CD8-positive, alpha-beta T cell (primary cell): ENCODE measurements at regions of chr14 and their contacts with region 1.

Region 1: DNA sequence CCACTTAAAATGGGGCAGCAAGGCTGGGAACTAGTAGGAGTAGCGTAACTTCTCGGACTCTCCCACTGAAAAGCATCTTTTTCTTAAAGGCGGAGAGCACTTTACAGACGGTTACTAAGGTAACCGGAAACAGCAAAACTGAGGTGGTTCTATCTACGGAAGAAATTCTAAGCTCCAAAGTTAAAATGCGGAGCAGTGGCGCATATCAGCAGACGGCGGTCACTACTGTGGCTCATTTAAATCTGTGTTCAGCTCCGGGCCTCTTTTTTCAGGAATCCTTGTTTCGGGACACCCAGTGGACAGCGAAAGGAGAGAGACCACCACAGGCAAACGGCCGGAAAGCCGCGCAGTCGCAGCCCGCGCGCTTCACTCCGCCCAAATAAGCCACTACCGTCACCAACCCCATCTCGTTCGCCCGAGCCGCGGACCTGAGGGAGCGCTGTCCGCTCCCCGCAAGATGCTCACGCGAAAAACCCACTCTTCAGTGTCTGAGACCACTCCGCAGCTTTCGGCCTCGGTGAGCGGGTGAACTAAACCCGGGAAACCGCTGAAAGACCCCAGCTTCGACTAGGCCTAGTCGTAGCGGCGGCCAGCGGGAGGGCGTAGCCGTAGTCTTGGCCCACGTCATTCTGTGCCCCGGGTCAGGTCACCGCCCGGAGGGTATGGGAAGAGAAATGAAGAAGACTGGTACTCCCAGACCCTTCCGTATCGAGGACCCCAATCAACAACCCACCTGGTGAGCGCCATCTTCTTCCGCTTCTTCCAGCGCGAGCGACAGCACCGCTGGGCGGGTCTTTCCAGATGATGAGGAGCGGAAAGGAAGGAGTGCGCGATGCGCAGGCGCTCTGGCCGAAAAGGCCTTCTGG is at the start of gene SNW1:
- DNase-seq: peak; percentile 78 to 97 (median 89)
- ATAC-seq: peak; percentile 91
- H3K4me3 ChIP-seq: peak within 1 kb of the TSS; percentile 78 to 90
- H3K4me3 Mint-ChIP-seq: peak within 1 kb of the TSS; percentile 96
- H3K27ac ChIP-seq: peak within 1 kb of the TSS; percentile 97 to 99
- H3K27ac Mint-ChIP-seq: peak within 1 kb of the TSS; percentile 98
- H3K4me1 ChIP-seq: peaks cover 34% of the 10 kb centered on the region
- H3K4me1 Mint-ChIP-seq: peaks cover 50% of the 10 kb centered on the region
- H3K27me3 ChIP-seq: no peaks in the 10 kb centered on the region
- H3K27me3 Mint-ChIP-seq: no peaks in the 10 kb centered on the region
- CTCF ChIP-seq: no peak
- total RNA-seq, gene SNW1: 115 to 124 TPM

Region 2: GRCh38 chr14:76151398-76152339 is 1608.9 kb before region 1 on chr14 and contains the start of gene GPATCH2L:
- CTCF ChIA-PET with region 1: no interaction called
- POLR2A ChIA-PET with region 1: no interaction called
- intact Hi-C with region 1: loop called in 1 of 2 experiments (anchors 5 kb)
- DNase-seq: peak; percentile 95 to 98 (median 97)
- ATAC-seq: peak; percentile 87
- H3K4me3 ChIP-seq: peak within 1 kb of the TSS; percentile 86 to 99
- H3K4me3 Mint-ChIP-seq: peak within 1 kb of the TSS; percentile 93
- H3K27ac ChIP-seq: peak within 1 kb of the TSS; percentile 85 to 98
- H3K27ac Mint-ChIP-seq: peak within 1 kb of the TSS; percentile 95
- H3K4me1 ChIP-seq: peaks cover 47% of the 10 kb centered on the region
- H3K4me1 Mint-ChIP-seq: peaks cover 54% of the 10 kb centered on the region
- H3K27me3 ChIP-seq: no peaks in the 10 kb centered on the region
- H3K27me3 Mint-ChIP-seq: no peaks in the 10 kb centered on the region
- CTCF ChIP-seq: no peak
- total RNA-seq, gene GPATCH2L: 74.4 to 78.1 TPM

Region 3: GRCh38 chr14:77212943-77213678 is 547.5 kb before region 1 on chr14:
- CTCF ChIA-PET with region 1: no interaction called
- POLR2A ChIA-PET with region 1: no interaction called
- intact Hi-C with region 1: no loop called
- DNase-seq: peak in 3 of 9 experiments; percentile 11 to 39 (median 21)
- ATAC-seq: no peak
- H3K4me3 ChIP-seq: no peak overlapping the region
- H3K4me3 Mint-ChIP-seq: no peak overlapping the region
- H3K27ac ChIP-seq: no peak overlapping the region
- H3K27ac Mint-ChIP-seq: no peak overlapping the region
- H3K4me1 ChIP-seq: no peaks in the 10 kb centered on the region
- H3K4me1 Mint-ChIP-seq: no peaks in the 10 kb centered on the region
- H3K27me3 ChIP-seq: no peaks in the 10 kb centered on the region
- H3K27me3 Mint-ChIP-seq: peaks cover 32% of the 10 kb centered on the region
- CTCF ChIP-seq: no peak

Region 4: GRCh38 chr14:77376771-77377501 is 383.7 kb before region 1 on chr14 and contains the starts of genes SAMD15 and TMED8:
- CTCF ChIA-PET with region 1: no interaction called
- POLR2A ChIA-PET with region 1: no interaction called
- intact Hi-C with region 1: loop called (anchors 1 to 5 kb)
- DNase-seq: peak; percentile 69 to 92 (median 82)
- ATAC-seq: peak; percentile 95
- H3K4me3 ChIP-seq: peak within 1 kb of the TSS; percentile 74 to 96
- H3K4me3 Mint-ChIP-seq: peak within 1 kb of the TSS; percentile 89
- H3K27ac ChIP-seq: peak within 1 kb of the TSS; percentile 62 to 91
- H3K27ac Mint-ChIP-seq: peak within 1 kb of the TSS; percentile 87
- H3K4me1 ChIP-seq: peaks cover 17% of the 10 kb centered on the region
- H3K4me1 Mint-ChIP-seq: peaks cover 38% of the 10 kb centered on the region
- H3K27me3 ChIP-seq: no peaks in the 10 kb centered on the region
- H3K27me3 Mint-ChIP-seq: no peaks in the 10 kb centered on the region
- CTCF ChIP-seq: no peak
- total RNA-seq, gene SAMD15: 0.50 to 0.52 TPM
- total RNA-seq, gene TMED8: 4.3 to 4.6 TPM

Region 5: DNA sequence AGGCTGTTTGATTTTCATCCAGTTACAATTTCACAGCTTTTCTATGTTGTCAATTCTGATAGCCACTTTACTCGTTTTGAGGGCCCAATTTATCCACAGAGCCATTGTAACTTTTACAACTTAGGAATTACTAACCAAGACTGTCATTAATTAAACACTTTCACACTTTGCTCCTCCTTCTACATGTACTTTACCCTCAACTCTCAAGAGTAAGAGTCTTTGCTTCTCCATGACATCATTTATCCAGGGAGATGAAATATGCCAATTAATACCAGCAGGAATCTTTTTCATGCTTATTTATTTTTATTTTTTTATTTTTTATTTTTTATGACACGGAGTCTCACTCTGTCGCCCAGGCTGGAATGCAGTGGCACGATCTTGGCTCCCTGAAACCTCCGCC is 39.2 kb before region 1 on chr14:
- CTCF ChIA-PET with region 1: no interaction called
- POLR2A ChIA-PET with region 1: no interaction called
- intact Hi-C with region 1: loop called in 1 of 2 experiments (anchors 5 kb)
- DNase-seq: no peak
- ATAC-seq: no peak
- H3K4me3 ChIP-seq: no peak overlapping the region
- H3K4me3 Mint-ChIP-seq: no peak overlapping the region
- H3K27ac ChIP-seq: no peak overlapping the region
- H3K27ac Mint-ChIP-seq: no peak overlapping the region
- H3K4me1 ChIP-seq: no peaks in the 10 kb centered on the region
- H3K4me1 Mint-ChIP-seq: no peaks in the 10 kb centered on the region
- H3K27me3 ChIP-seq: no peaks in the 10 kb centered on the region
- H3K27me3 Mint-ChIP-seq: no peaks in the 10 kb centered on the region
- CTCF ChIP-seq: no peak

Region 6: DNA sequence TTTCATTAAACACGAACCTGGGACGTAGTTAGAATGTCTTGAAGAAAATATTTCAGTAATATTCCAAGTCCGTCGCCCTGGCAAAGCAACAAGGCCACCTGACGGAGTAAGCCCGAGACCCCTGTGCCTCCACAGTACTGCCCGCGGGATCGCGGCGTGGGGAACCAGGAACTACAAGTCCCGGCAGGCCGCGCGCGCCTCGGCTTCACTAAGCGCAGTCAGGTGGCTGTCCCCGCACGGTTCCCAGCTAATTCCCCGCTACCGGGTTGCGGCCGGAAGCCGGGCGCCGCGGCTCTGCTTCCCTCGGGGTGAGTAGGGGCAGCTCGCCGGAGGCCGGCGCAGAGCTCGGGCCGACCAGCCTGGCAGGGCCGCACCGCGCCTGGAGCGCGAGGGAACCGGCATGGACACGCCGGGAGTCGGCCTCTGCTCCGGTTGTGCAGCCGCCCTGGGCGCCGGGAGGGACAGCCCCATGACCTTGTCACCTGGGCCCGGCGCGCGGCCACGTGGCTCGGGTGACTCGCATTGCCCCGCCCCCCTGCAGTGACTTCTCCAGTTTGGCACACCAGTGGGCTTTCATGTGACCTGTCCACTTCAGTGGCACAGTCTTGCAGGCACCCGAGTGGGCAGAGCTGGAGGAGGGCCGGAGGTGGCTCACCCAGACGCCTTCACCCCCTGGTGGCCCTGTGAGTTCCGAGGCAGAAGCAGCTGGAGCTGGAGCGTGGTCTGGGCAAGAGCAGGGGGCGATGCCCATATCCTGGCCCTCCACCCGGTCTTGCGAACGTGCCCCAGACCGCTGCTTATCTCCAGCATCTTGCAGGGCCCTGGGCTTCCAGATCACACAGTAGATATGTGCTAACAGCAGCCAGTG is 39.5 kb after region 1 on chr14 and contains the start of gene ADCK1:
- CTCF ChIA-PET with region 1: interaction called, 3 read pairs
- POLR2A ChIA-PET with region 1: interaction called, 9 read pairs
- intact Hi-C with region 1: loop called (anchors 1 kb)
- DNase-seq: peak; percentile 54 to 89 (median 83)
- ATAC-seq: peak; percentile 91
- H3K4me3 ChIP-seq: peak within 1 kb of the TSS; percentile 68 to 96
- H3K4me3 Mint-ChIP-seq: peak within 1 kb of the TSS; percentile 83
- H3K27ac ChIP-seq: peak within 1 kb of the TSS; percentile 73 to 78
- H3K27ac Mint-ChIP-seq: peak within 1 kb of the TSS; percentile 76
- H3K4me1 ChIP-seq: peaks cover 3% of the 10 kb centered on the region
- H3K4me1 Mint-ChIP-seq: peaks cover 10% of the 10 kb centered on the region
- H3K27me3 ChIP-seq: no peaks in the 10 kb centered on the region
- H3K27me3 Mint-ChIP-seq: peaks cover 2% of the 10 kb centered on the region
- CTCF ChIP-seq: no peak
- total RNA-seq, gene ADCK1: 3.6 to 4.7 TPM